ENCODE measurements at regions of chr14 and their contacts with region 1.

Region 1: DNA sequence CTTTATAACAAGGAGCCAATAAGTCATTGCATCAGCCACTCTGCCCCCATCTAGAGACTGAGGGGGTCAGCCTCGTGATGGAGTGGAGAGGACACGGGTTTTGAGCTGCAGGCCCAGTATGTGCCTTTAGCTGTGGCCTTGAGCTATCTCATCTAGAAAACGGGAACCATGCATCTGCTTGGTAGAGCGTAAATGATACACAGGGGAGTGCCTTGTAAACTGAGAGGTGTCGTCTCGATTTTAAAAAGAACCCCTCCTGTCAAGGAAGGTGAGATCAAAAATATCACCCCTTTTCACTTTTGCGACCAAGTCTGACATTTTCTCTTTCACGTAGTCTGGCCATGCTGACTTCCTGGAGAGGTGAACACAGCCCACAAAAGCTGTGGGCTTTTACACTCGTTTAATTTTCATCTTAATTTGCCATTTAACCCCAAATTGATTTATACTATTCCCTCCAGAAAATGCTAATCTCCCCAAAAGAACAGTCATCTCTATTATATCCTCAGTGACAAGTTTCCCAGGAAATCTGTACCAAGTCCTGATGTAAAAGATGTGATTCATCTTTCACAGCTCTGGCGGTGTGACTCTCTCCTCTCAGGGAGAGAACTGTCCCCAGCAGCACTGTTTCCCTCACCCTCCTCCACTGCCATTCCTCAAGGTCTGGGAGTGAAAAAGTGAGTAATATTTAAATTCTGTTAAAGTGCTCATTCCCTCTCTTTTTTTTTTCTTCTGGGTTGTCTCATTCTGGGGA is 30.6 kb downstream of the VCPKMT start:
- DNase-seq: peak; percentile 79
- H3K4me3 ChIP-seq: no peak overlapping the region
- H3K27ac ChIP-seq: peak overlapping the region; percentile 21
- H3K4me1 ChIP-seq: peaks cover 47% of the 10 kb centered on the region
- CTCF ChIP-seq: no peak

Region 2: DNA sequence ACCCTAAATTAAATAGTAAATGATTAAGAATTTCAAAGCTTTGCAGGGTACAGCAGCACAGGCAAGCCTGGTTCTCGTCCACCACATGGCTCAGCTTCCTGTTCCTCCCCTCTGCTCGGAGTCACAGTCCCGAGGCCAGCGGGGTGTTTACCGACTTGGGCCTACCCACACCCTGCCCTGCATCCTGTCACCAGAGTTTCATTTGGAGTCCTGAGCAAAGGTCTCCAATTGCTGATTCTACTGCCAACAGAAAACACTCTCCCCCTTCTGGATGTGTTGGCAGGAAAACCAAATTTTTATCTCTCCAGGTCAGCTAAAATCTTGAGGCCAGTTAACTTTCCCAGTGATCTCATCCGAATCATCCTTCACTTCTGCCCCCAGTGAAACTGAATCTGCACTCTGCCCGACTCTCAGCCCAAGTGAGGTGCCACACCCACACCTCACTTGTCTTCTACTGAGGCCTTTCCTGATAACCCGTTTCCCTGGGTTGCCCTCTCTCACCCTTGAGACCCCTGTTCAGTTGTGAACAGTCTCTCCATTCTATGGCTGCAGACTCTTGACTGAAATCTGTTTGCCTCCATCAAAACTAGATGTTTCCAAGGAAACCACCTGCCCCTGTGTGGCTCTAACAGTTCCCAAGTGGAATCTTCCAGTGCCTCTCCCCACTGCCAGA is 40.6 kb before region 1 on chr14:
- CTCF ChIA-PET with region 1: no interaction called
- POLR2A ChIA-PET with region 1: interaction called, 10 read pairs
- intact Hi-C with region 1: no loop called
- DNase-seq: peak; percentile 77
- H3K4me3 ChIP-seq: no peak overlapping the region
- H3K27ac ChIP-seq: peak overlapping the region; percentile 11
- H3K4me1 ChIP-seq: peaks cover 40% of the 10 kb centered on the region
- CTCF ChIP-seq: no peak

Measured in OCI-LY7 (cell line).